Activated naive CD8-positive, alpha-beta T cell treated with anti-CD3 and anti-CD28 coated beads, Interleukin-2, amount 10 ng/mL, durations not matched to agents 7 days and 5 days (primary cell): ENCODE measurements at regions of chr1 and their contacts with region 1.

Region 1: DNA sequence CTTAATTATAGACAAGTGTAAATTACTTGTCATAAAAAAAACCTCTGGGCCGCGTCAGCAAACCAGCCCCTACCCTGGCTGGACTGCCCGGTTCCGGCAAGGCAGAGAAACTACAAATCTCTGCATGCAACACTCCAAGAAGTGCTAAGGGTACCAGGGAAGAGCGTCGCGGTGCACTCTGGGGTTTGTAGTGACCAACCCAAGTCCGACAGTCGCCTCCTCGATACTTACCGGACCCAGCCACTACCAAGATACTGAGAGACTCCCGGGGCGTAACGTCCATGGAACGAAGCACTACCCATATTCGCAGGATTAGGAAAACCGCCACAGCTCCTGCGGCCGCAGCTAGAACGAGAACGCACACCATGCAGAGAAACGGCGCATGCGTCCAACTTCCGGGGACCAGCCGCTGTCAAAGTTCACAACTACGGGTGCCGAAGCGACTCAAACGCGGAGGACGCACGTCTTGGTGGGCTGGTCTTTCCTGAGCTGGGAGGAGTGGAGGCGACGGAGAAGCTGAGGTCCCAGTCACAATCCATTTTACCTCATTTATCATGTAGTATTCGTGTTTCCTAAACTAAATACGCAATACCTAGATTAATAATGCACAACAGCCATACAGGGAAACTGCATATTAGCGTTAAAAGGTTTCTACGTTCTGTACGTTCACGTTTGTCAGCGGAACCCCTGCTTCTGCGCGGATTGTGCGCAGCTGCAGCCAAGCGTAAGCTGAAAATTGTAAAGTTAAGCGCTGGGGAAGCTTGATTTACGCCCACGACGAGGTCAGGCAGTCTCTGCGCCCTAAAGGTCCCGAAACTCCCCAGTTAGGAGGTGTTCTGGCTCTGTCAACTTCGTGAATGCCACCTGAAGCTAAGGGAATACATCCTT is at the start of gene ALG14:
- DNase-seq: peak; percentile 89
- ATAC-seq: peak; percentile 96
- H3K4me3 Mint-ChIP-seq: peak within 1 kb of the TSS; percentile 90
- H3K27ac Mint-ChIP-seq: peak within 1 kb of the TSS; percentile 91
- H3K4me1 Mint-ChIP-seq: peaks cover 14% of the 10 kb centered on the region
- H3K27me3 Mint-ChIP-seq: peaks cover 3% of the 10 kb centered on the region
- total RNA-seq, gene ALG14: 1.8 to 2.1 TPM

Region 2: GRCh38 chr1:95095833-95096217 is 23.0 kb after region 1 on chr1:
- POLR2A ChIA-PET with region 1: no interaction called
- DNase-seq: no peak
- ATAC-seq: no peak
- H3K4me3 Mint-ChIP-seq: no peak overlapping the region
- H3K27ac Mint-ChIP-seq: no peak overlapping the region
- H3K4me1 Mint-ChIP-seq: no peaks in the 10 kb centered on the region
- H3K27me3 Mint-ChIP-seq: peaks cover 11% of the 10 kb centered on the region

Region 3: GRCh38 chr1:95233737-95234500 is 161.1 kb after region 1 on chr1 and contains the start of gene RWDD3:
- POLR2A ChIA-PET with region 1: interaction called, 17 read pairs
- DNase-seq: peak; percentile 98
- ATAC-seq: peak; percentile 95
- H3K4me3 Mint-ChIP-seq: peak within 1 kb of the TSS; percentile 99
- H3K27ac Mint-ChIP-seq: peak within 1 kb of the TSS; percentile 95
- H3K4me1 Mint-ChIP-seq: peaks cover 22% of the 10 kb centered on the region
- H3K27me3 Mint-ChIP-seq: peaks cover 20% of the 10 kb centered on the region
- total RNA-seq, gene RWDD3: 18.0 to 21.4 TPM